ENCODE measurements at regions of chr12 and their contacts with region 1.

Region 1: DNA sequence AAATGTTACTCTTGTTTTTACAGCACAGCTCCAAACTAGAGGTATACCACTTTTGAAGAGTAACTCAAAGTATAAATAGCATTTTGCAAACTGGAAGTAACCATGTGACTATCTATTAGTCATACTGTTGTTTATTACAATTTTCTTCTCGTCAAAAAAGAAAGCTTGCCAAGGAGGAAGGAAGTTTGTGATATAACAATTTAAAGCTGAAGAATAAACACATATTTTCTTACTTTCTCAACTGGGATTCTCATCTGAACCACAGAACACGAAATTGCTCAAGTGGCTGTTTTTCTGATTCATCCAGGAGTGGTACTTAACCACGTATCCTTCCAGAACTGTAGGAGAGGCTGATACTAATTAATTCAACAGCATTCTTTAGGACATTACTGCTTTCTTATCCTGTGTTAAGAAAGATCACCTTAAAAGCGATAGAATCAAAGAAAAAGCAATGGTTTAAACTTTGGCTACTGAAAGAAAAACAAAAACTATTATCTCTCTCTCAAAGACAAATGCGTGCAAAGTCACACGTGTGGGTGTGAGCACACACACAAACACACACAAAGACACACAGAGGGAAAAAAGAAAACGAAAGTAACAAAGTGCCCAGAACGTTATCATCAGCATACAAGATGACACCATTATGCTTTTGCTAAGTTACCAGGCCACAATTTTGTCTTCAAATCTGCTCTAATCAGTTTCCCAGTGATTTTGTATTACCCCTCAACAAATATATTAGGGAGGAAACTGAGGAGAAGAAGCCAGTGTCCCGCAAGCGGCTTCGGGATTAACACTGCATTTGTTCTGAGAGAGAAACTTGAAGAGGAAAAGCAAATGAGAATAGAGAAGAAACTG is at the start of gene CLEC2B:
- DNase-seq: peak in 3 of 5 donors; percentile 59 to 63 (median 61)
- H3K4me3 ChIP-seq: peak within 1 kb of the TSS; percentile 65
- H3K4me3 Mint-ChIP-seq: peak within 1 kb of the TSS; percentile 88 to 97 (median 91)
- H3K27ac ChIP-seq: peak within 1 kb of the TSS; percentile 73
- H3K27ac Mint-ChIP-seq: peak within 1 kb of the TSS; percentile 89 to 100 (median 96)
- H3K4me1 ChIP-seq: peaks cover 9% of the 10 kb centered on the region
- H3K4me1 Mint-ChIP-seq: peaks cover 20 to 40% (median 22%) of the 10 kb centered on the region in 3 donors
- H3K27me3 ChIP-seq: no peaks in the 10 kb centered on the region
- H3K27me3 Mint-ChIP-seq: no peaks in the 10 kb centered on the region
- total RNA-seq, gene CLEC2B: 13.7 to 16.5 TPM

Region 2: DNA sequence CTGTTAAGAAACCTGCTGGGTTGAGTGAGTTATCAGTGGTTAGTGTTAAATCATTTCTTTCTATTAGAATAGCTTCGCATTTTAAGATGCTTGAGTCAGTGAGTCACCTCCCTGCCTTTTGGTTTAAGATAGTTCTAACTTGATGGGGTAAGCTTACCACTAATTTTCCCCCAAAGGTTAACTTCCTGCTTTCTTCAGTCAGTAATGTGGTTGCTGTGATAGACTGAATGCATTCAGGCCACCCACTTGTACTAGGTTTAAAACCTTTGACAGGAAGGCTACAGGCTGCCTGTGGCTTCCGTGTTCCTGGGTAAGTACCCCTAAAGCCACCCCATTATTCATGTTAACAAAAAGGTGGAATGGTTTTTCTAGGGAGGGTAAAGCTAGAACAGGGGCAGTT is 37.3 kb after region 1 on chr12:
- CTCF ChIA-PET with region 1: interaction called, 9 read pairs
- POLR2A ChIA-PET with region 1: interaction called, 17 read pairs
- DNase-seq: peak; percentile 6 to 75 (median 67)
- H3K4me3 ChIP-seq: peak overlapping the region; percentile 30
- H3K4me3 Mint-ChIP-seq: peak overlapping the region in 6 of 7 donors; percentile 17 to 67 (median 34)
- H3K27ac ChIP-seq: no peak overlapping the region
- H3K27ac Mint-ChIP-seq: peak overlapping the region; percentile 35 to 90 (median 76)
- H3K4me1 ChIP-seq: peaks cover 25% of the 10 kb centered on the region
- H3K4me1 Mint-ChIP-seq: peaks cover 30 to 45% (median 40%) of the 10 kb centered on the region in 3 donors
- H3K27me3 ChIP-seq: no peaks in the 10 kb centered on the region
- H3K27me3 Mint-ChIP-seq: peaks cover 0 to 1% of the 10 kb centered on the region in 2 donors

Region 3: GRCh38 chr12:10027721-10028120 is 158.2 kb after region 1 on chr12:
- CTCF ChIA-PET with region 1: no interaction called
- POLR2A ChIA-PET with region 1: no interaction called
- DNase-seq: no peak
- H3K4me3 ChIP-seq: no peak overlapping the region
- H3K4me3 Mint-ChIP-seq: no peak overlapping the region
- H3K27ac ChIP-seq: no peak overlapping the region
- H3K27ac Mint-ChIP-seq: no peak overlapping the region
- H3K4me1 ChIP-seq: no peaks in the 10 kb centered on the region
- H3K4me1 Mint-ChIP-seq: no peaks in the 10 kb centered on the region
- H3K27me3 ChIP-seq: no peaks in the 10 kb centered on the region
- H3K27me3 Mint-ChIP-seq: peaks cover 6 to 20% of the 10 kb centered on the region in 2 donors